ENCODE measurements at regions of chr7 and their contacts with region 1.

Region 1: DNA sequence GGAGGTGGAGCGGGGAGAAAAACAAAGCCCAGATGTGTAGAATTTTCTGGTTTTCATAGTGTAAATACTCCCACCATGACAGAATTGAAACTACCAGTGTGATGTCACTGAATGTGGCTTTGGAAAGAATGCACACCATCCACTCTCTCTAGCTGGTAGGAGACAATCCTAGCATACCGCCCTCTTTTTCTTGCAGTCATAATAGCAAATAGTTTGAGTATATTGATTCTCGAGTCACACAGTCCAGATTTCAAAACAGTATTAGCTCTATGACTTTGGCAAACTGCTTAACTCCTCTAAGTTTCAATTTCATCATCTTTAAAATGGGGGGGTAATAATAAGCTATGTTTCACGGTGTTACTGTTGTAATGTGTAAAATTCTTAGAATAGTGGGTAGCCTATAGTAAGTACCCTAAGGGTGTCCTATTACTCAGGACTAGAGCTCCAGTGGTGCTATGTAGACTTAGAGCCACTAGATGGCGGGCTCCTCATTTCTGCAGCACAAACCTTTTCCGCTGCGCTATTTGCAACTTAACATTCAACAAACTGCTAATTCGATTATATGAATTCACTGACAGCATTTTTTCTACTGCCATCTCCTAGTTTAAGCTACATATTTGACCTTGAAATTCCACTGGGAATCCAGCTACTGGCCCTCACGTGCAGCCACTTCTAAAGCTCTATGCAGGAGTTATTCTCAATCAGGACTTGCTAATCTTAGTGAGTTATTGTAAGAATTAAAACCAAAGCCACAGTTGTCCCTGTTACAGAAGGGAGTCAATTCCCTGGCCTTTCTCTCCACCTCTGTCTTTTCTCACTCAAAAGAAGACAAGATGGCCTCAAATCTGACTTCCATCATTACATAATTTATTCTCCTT is 18.7 kb downstream of the TAS2R40 start:
- DNase-seq: peak; percentile 48 to 86 (median 72)
- ATAC-seq: peak; percentile 99
- H3K4me3 ChIP-seq: no peak overlapping the region
- H3K4me3 Mint-ChIP-seq: no peak overlapping the region
- H3K27ac ChIP-seq: no peak overlapping the region
- H3K27ac Mint-ChIP-seq: no peak overlapping the region
- H3K4me1 ChIP-seq: peaks cover 18% of the 10 kb centered on the region
- H3K4me1 Mint-ChIP-seq: peaks cover 24% of the 10 kb centered on the region
- H3K27me3 ChIP-seq: no peaks in the 10 kb centered on the region
- H3K27me3 Mint-ChIP-seq: peaks cover 4% of the 10 kb centered on the region
- CTCF ChIP-seq: peak; percentile 97

Region 2: GRCh38 chr7:141617280-141617679 is 1623.2 kb before region 1 on chr7:
- CTCF ChIA-PET with region 1: no interaction called
- POLR2A ChIA-PET with region 1: no interaction called
- intact Hi-C with region 1: no loop called
- DNase-seq: no peak
- ATAC-seq: no peak
- H3K4me3 ChIP-seq: no peak overlapping the region
- H3K4me3 Mint-ChIP-seq: no peak overlapping the region
- H3K27ac ChIP-seq: no peak overlapping the region
- H3K27ac Mint-ChIP-seq: no peak overlapping the region
- H3K4me1 ChIP-seq: no peaks in the 10 kb centered on the region
- H3K4me1 Mint-ChIP-seq: no peaks in the 10 kb centered on the region
- H3K27me3 ChIP-seq: no peaks in the 10 kb centered on the region
- H3K27me3 Mint-ChIP-seq: no peaks in the 10 kb centered on the region
- CTCF ChIP-seq: no peak

Region 3: GRCh38 chr7:143214789-143215679 is 25.5 kb before region 1 on chr7:
- CTCF ChIA-PET with region 1: interaction called, 20 read pairs
- POLR2A ChIA-PET with region 1: no interaction called
- intact Hi-C with region 1: no loop called
- DNase-seq: peak; percentile 25 to 87 (median 59)
- ATAC-seq: peak; percentile 98
- H3K4me3 ChIP-seq: no peak overlapping the region
- H3K4me3 Mint-ChIP-seq: no peak overlapping the region
- H3K27ac ChIP-seq: no peak overlapping the region
- H3K27ac Mint-ChIP-seq: no peak overlapping the region
- H3K4me1 ChIP-seq: no peaks in the 10 kb centered on the region
- H3K4me1 Mint-ChIP-seq: no peaks in the 10 kb centered on the region
- H3K27me3 ChIP-seq: no peaks in the 10 kb centered on the region
- H3K27me3 Mint-ChIP-seq: peaks cover 4% of the 10 kb centered on the region
- CTCF ChIP-seq: peak; percentile 100

Region 4: DNA sequence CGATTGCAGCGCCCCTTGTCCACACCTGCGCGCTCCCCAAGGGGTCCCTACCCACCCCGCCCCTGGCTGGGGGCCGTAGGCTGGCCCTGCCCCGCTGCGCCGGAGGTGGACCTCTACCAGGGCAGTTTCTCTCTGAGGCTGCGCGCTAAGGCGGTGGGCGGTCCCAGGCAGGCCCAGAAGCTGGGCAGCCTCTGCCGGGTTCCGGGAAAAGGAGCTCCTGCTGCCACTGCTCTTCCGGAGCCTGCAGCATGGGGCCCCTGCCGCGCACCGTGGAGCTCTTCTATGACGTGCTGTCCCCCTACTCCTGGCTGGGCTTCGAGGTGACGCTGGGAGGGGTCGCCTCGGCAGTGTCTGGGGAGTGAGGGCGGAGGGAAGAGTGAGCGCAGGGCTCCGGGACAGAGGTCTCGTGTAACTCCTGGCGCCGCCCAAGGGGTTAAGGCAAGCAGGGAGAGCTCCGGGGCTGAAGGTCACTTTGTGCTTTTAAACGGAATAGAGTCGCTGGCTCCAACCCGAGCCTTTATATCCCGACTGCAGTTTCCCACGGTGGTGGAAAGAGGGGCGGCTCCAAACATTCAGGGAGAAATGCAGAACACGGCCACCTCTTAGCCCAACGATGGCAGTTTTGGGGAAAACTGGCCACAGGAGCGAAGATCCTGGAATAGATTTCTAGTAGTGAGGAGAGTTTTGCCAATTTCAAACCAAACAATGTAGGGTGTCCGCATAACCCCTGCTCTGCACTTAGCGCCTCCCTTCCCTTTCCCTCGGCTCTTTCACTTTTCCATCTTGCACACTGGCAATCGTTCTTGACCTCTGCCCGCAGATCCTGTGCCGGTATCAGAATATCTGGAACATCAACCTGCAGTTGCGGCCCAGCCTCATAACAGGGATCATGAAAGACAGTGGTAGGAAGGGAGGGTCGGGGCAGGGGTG is 23.0 kb after region 1 on chr7 and contains the start of gene GSTK1:
- CTCF ChIA-PET with region 1: interaction called, 43 read pairs
- POLR2A ChIA-PET with region 1: interaction called, 7 read pairs
- intact Hi-C with region 1: loop called (anchors 1 to 2 kb)
- DNase-seq: peak; percentile 34 to 86 (median 79)
- ATAC-seq: peak; percentile 95
- H3K4me3 ChIP-seq: peak within 1 kb of the TSS; percentile 90 to 98
- H3K4me3 Mint-ChIP-seq: peak within 1 kb of the TSS; percentile 96
- H3K27ac ChIP-seq: peak within 1 kb of the TSS; percentile 70 to 80
- H3K27ac Mint-ChIP-seq: peak within 1 kb of the TSS; percentile 97
- H3K4me1 ChIP-seq: peaks cover 34% of the 10 kb centered on the region
- H3K4me1 Mint-ChIP-seq: peaks cover 63% of the 10 kb centered on the region
- H3K27me3 ChIP-seq: no peaks in the 10 kb centered on the region
- H3K27me3 Mint-ChIP-seq: no peaks in the 10 kb centered on the region
- CTCF ChIP-seq: no peak
- total RNA-seq, gene GSTK1: 200 to 208 TPM

Region 5: GRCh38 chr7:143287935-143288826 is 47.7 kb after region 1 on chr7 and contains the start of gene CASP2:
- CTCF ChIA-PET with region 1: interaction called, 40 read pairs
- POLR2A ChIA-PET with region 1: interaction called, 7 read pairs
- intact Hi-C with region 1: loop called in 1 of 2 experiments (anchors 1 kb)
- DNase-seq: peak; percentile 96 to 100 (median 99)
- ATAC-seq: peak; percentile 96
- H3K4me3 ChIP-seq: peak within 1 kb of the TSS; percentile 91 to 95
- H3K4me3 Mint-ChIP-seq: peak within 1 kb of the TSS; percentile 93
- H3K27ac ChIP-seq: peak within 1 kb of the TSS; percentile 64 to 72
- H3K27ac Mint-ChIP-seq: peak within 1 kb of the TSS; percentile 91
- H3K4me1 ChIP-seq: peaks cover 40% of the 10 kb centered on the region
- H3K4me1 Mint-ChIP-seq: peaks cover 53% of the 10 kb centered on the region
- H3K27me3 ChIP-seq: no peaks in the 10 kb centered on the region
- H3K27me3 Mint-ChIP-seq: no peaks in the 10 kb centered on the region
- CTCF ChIP-seq: peak; percentile 31
- total RNA-seq, gene CASP2: 16.0 to 19.1 TPM

Region 6: GRCh38 chr7:143316492-143316891 is 76.0 kb after region 1 on chr7:
- CTCF ChIA-PET with region 1: interaction called, 13 read pairs
- POLR2A ChIA-PET with region 1: no interaction called
- intact Hi-C with region 1: no loop called
- DNase-seq: no peak
- ATAC-seq: no peak
- H3K4me3 ChIP-seq: no peak overlapping the region
- H3K4me3 Mint-ChIP-seq: no peak overlapping the region
- H3K27ac ChIP-seq: no peak overlapping the region
- H3K27ac Mint-ChIP-seq: no peak overlapping the region
- H3K4me1 ChIP-seq: no peaks in the 10 kb centered on the region
- H3K4me1 Mint-ChIP-seq: peaks cover 7% of the 10 kb centered on the region
- H3K27me3 ChIP-seq: no peaks in the 10 kb centered on the region
- H3K27me3 Mint-ChIP-seq: no peaks in the 10 kb centered on the region
- CTCF ChIP-seq: no peak

Region 7: DNA sequence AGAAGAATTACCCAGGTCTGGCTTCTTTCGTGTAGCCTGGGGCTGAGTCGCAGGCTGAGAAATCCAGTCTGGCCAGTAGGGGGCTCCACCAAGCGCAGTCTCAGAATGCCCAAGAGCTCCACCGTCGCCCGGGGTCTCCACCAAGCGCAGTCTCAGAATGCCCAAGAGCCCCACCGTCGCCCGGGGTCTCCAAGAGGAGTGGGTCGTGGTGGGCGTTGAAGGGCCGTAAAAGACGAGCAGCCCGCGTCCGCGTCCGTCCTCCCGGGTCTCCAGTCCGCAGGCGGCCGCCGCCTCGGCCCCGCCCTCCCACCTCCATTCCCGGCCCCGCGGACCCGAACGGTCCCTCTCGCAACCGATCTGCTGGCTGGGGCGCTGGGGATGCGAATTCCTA is 139.7 kb after region 1 on chr7:
- CTCF ChIA-PET with region 1: interaction called, 36 read pairs
- POLR2A ChIA-PET with region 1: interaction called, 4 read pairs
- intact Hi-C with region 1: loop called (anchors 5 to 10 kb)
- DNase-seq: peak; percentile 82 to 94 (median 89)
- ATAC-seq: peak; percentile 42
- H3K4me3 ChIP-seq: peak overlapping the region; percentile 96 to 99
- H3K4me3 Mint-ChIP-seq: peak overlapping the region; percentile 90
- H3K27ac ChIP-seq: peak overlapping the region; percentile 84 to 95
- H3K27ac Mint-ChIP-seq: peak overlapping the region; percentile 94
- H3K4me1 ChIP-seq: peaks cover 81% of the 10 kb centered on the region
- H3K4me1 Mint-ChIP-seq: peaks cover 40% of the 10 kb centered on the region
- H3K27me3 ChIP-seq: no peaks in the 10 kb centered on the region
- H3K27me3 Mint-ChIP-seq: no peaks in the 10 kb centered on the region
- CTCF ChIP-seq: peak; percentile 61

Region 8: GRCh38 chr7:143416565-143417149 is 176.1 kb after region 1 on chr7:
- CTCF ChIA-PET with region 1: interaction called, 96 read pairs
- POLR2A ChIA-PET with region 1: interaction called, 15 read pairs
- intact Hi-C with region 1: loop called (anchors 1 to 2 kb)
- DNase-seq: peak in 4 of 9 experiments; percentile 23 to 72 (median 47)
- ATAC-seq: peak; percentile 69
- H3K4me3 ChIP-seq: no peak overlapping the region
- H3K4me3 Mint-ChIP-seq: no peak overlapping the region
- H3K27ac ChIP-seq: no peak overlapping the region
- H3K27ac Mint-ChIP-seq: no peak overlapping the region
- H3K4me1 ChIP-seq: peaks cover 3% of the 10 kb centered on the region
- H3K4me1 Mint-ChIP-seq: peaks cover 16% of the 10 kb centered on the region
- H3K27me3 ChIP-seq: no peaks in the 10 kb centered on the region
- H3K27me3 Mint-ChIP-seq: peaks cover 2% of the 10 kb centered on the region
- CTCF ChIP-seq: peak; percentile 80

Region 9: DNA sequence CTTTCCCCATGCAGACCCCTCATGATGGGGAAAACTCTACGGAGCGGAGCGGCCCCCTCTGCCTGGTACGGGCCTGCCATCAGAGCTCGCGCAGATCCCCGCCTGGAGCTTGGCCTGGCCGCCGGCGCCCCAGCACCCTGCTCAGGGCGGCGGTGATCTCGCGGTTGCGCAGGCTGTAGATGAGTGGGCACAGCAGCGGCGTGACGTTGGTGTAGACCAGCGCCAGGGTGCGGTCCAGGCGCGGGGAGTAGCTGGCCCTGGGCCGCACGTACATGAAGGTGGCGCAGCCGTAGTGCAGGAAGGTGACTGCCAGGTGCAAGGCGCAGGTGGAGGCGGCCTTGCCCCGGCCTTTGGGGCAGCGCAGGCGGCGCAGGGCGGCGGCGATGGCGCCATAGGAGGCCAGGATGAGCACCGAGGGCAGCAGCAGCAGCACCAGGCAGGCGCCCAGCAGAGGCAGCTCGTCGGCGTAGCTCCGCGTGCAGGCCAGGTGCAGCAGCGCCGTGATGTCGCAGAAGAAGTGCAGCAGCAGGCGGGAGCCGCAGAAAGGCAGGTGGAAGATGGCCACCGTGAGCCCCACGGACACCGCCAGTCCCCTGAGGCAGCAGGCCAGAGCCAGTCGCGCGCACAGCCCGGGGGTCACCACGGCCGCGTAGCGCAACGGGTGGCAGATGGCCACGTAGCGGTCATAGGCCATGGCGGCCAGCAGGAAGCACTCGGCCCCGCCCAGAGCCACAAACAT is 270.5 kb after region 1 on chr7:
- CTCF ChIA-PET with region 1: no interaction called
- POLR2A ChIA-PET with region 1: no interaction called
- intact Hi-C with region 1: no loop called
- DNase-seq: no peak
- ATAC-seq: no peak
- H3K4me3 ChIP-seq: no peak overlapping the region
- H3K4me3 Mint-ChIP-seq: no peak overlapping the region
- H3K27ac ChIP-seq: no peak overlapping the region
- H3K27ac Mint-ChIP-seq: no peak overlapping the region
- H3K4me1 ChIP-seq: no peaks in the 10 kb centered on the region
- H3K4me1 Mint-ChIP-seq: no peaks in the 10 kb centered on the region
- H3K27me3 ChIP-seq: no peaks in the 10 kb centered on the region
- H3K27me3 Mint-ChIP-seq: no peaks in the 10 kb centered on the region
- CTCF ChIP-seq: no peak